ENCODE measurements at regions of chr9 and their contacts with region 1.

Region 1: DNA sequence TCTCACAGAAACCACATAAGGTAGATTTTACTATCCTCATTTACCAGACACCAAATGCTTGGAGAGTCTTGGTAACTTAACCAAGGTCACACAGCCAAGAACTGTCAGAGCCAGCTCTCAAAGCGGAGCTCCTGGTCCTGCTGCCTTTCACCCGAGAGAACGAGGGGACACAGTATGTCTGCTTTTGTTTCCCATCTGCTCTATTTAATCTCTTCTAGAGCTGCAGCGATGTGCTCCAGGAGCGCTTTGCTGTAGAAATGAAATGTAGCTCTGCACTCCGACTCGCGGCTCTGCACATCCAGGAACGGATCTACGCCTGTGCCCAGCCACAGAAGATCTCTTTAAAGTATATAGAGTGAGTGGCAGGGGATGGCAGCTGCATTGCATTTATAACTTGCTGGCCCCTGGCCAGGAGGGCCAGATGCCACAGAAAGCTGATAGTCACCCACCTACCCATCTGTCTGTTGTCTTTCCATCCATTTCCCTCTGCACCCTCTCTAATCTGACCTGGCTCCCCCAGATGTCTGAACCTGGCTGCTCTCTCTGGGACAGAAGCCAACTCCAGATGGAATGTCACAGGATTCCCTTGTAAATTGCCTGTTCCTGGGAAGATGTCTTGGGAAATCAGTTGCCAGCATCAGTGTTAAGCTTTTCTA is 21.4 kb upstream of the TRMT10B start:
- DNase-seq: no peak
- ATAC-seq: no peak
- H3K4me3 ChIP-seq: no peak overlapping the region
- H3K27ac ChIP-seq: no peak overlapping the region
- H3K4me1 ChIP-seq: no peaks in the 10 kb centered on the region
- H3K27me3 ChIP-seq: peaks cover 0 to 18% (median 0%) of the 10 kb centered on the region in 7 donors
- CTCF ChIP-seq: no peak

Region 2: GRCh38 chr9:37592108-37592951 is 139.9 kb before region 1 on chr9 and contains the start of gene TOMM5:
- intact Hi-C with region 1: no loop called
- DNase-seq: peak; percentile 92 to 94
- ATAC-seq: peak; percentile 98 to 100 (median 98)
- H3K4me3 ChIP-seq: peak within 1 kb of the TSS; percentile 69 to 95 (median 82)
- H3K27ac ChIP-seq: peak within 1 kb of the TSS; percentile 43 to 90 (median 80)
- H3K4me1 ChIP-seq: peaks cover 0 to 42% (median 21%) of the 10 kb centered on the region in 9 donors
- H3K27me3 ChIP-seq: peaks cover 0 to 10% (median 3%) of the 10 kb centered on the region in 7 donors
- CTCF ChIP-seq: no peak
- total RNA-seq, gene TOMM5: 45.7 to 62.9 (median 52.1) TPM

Region 3: GRCh38 chr9:37676411-37676830 is 55.8 kb before region 1 on chr9:
- intact Hi-C with region 1: loop called in 1 of 10 experiments (anchors 5 kb)
- DNase-seq: peak in 1 of 2 donors; percentile 29
- ATAC-seq: peak; percentile 64 to 90 (median 75)
- H3K4me3 ChIP-seq: peak overlapping the region in 4 of 10 donors; percentile 14 to 17 (median 16)
- H3K27ac ChIP-seq: peak overlapping the region in 3 of 10 donors; percentile 1 to 39 (median 39)
- H3K4me1 ChIP-seq: peaks cover 0 to 7% (median 3%) of the 10 kb centered on the region in 9 donors
- H3K27me3 ChIP-seq: peaks cover 0 to 5% (median 0%) of the 10 kb centered on the region in 7 donors
- CTCF ChIP-seq: no peak

Region 4: GRCh38 chr9:37800631-37801286 is 68.5 kb after region 1 on chr9 and contains the start of gene DCAF10:
- intact Hi-C with region 1: loop called in 1 of 10 experiments (anchors 10 kb)
- DNase-seq: peak; percentile 87 to 88
- ATAC-seq: peak; percentile 95 to 97 (median 97)
- H3K4me3 ChIP-seq: peak within 1 kb of the TSS; percentile 78 to 99 (median 96)
- H3K27ac ChIP-seq: peak within 1 kb of the TSS; percentile 18 to 94 (median 88)
- H3K4me1 ChIP-seq: peaks cover 8 to 39% (median 35%) of the 10 kb centered on the region in 9 donors
- H3K27me3 ChIP-seq: no peaks in the 10 kb centered on the region
- CTCF ChIP-seq: no peak
- total RNA-seq, gene DCAF10: 16.1 to 23.4 (median 19.6) TPM